ENCODE measurements at regions of chr3 and their contacts with region 1.

Region 1: GRCh38 chr3:146065573-146066006 is 95.4 kb downstream of the PLOD2 start:
- DNase-seq: peak; percentile 38
- ATAC-seq: no peak
- H3K4me3 ChIP-seq: no peak overlapping the region
- H3K27ac ChIP-seq: no peak overlapping the region
- H3K4me1 ChIP-seq: no peaks in the 10 kb centered on the region
- H3K27me3 ChIP-seq: no peaks in the 10 kb centered on the region
- CTCF ChIP-seq: peak; percentile 57 to 70 (median 63)
- POLR2A ChIP-seq: no peak
- RAD21 ChIP-seq: peak; percentile 80

Region 2: DNA sequence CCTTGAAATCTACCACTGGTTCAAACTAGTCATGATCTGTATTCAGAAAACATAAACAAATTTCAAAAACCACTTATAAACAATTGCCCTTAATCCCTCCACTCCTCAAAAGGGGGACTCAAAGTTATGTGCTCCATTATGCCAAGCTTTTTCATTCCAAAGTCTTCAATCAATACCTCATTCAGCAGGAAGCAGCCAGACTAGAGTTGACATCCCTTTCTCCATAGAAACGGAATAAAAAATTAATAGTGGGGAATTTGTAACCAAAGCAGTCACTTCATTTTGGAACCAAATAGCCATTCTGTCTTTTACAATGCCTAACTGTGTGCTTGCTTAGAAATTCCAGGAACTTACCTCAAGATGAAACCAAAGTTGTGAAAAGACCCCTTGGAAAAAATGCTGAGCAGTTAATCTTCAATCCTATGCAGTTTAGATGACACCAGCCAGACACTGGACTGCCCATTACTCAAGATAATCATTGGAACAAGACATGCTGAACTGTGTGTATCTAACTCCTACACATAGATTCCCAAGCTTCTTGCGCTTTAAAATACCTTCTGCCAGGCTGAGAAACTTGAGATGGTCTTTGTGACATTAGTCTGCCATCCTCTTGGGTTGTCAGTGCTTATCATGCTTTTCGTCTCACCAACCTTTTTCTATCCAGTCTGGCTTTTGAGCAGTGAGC is 310.8 kb before region 1 on chr3:
- CTCF ChIA-PET with region 1: no interaction called
- POLR2A ChIA-PET with region 1: no interaction called
- RAD21 ChIA-PET with region 1: no interaction called
- intact Hi-C with region 1: no loop called
- DNase-seq: no peak
- ATAC-seq: no peak
- H3K4me3 ChIP-seq: no peak overlapping the region
- H3K27ac ChIP-seq: no peak overlapping the region
- H3K4me1 ChIP-seq: no peaks in the 10 kb centered on the region
- H3K27me3 ChIP-seq: no peaks in the 10 kb centered on the region
- CTCF ChIP-seq: no peak
- POLR2A ChIP-seq: no peak
- RAD21 ChIP-seq: no peak

Region 3: DNA sequence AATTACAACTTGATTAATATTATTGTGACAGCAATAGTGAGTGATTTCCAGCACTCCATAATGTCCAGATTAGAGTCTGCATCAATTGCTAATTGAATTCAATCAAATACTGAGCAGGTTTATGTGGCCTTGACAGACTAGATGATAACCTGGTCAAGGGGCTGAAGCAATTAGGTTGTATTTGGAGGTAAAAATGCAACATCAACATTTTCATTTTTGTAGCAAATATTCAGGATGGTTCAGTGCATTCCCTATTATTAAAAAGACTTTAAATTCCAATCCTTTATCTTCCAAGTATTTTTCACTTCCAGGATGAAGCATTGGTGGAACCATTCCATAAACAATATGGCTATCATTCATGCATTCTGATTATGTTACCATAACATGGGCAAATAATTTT is 25.0 kb before region 1 on chr3:
- CTCF ChIA-PET with region 1: no interaction called
- POLR2A ChIA-PET with region 1: no interaction called
- RAD21 ChIA-PET with region 1: no interaction called
- intact Hi-C with region 1: no loop called
- DNase-seq: no peak
- ATAC-seq: no peak
- H3K4me3 ChIP-seq: no peak overlapping the region
- H3K27ac ChIP-seq: no peak overlapping the region
- H3K4me1 ChIP-seq: no peaks in the 10 kb centered on the region
- H3K27me3 ChIP-seq: no peaks in the 10 kb centered on the region
- CTCF ChIP-seq: no peak
- POLR2A ChIP-seq: no peak
- RAD21 ChIP-seq: no peak

Region 4: GRCh38 chr3:146052791-146053310 is 12.7 kb before region 1 on chr3:
- CTCF ChIA-PET with region 1: interaction called, 19 read pairs
- POLR2A ChIA-PET with region 1: no interaction called
- RAD21 ChIA-PET with region 1: no interaction called
- intact Hi-C with region 1: no loop called
- DNase-seq: no peak
- ATAC-seq: no peak
- H3K4me3 ChIP-seq: no peak overlapping the region
- H3K27ac ChIP-seq: no peak overlapping the region
- H3K4me1 ChIP-seq: no peaks in the 10 kb centered on the region
- H3K27me3 ChIP-seq: no peaks in the 10 kb centered on the region
- CTCF ChIP-seq: no peak
- POLR2A ChIP-seq: no peak
- RAD21 ChIP-seq: no peak

Region 5: GRCh38 chr3:146184616-146185015 is 119.0 kb after region 1 on chr3:
- CTCF ChIA-PET with region 1: interaction called, 109 read pairs
- POLR2A ChIA-PET with region 1: interaction called, 4 read pairs
- RAD21 ChIA-PET with region 1: interaction called, 6 to 14 read pairs
- intact Hi-C with region 1: loop called (anchors 1 kb)
- DNase-seq: peak; percentile 45
- ATAC-seq: peak; percentile 54; the same call in 1 of the 2 replicates
- H3K4me3 ChIP-seq: no peak overlapping the region
- H3K27ac ChIP-seq: no peak overlapping the region
- H3K4me1 ChIP-seq: peaks cover 0 to 11% of the 10 kb centered on the region in 2 experiments; a peak in 2 of 4 replicates
- H3K27me3 ChIP-seq: no peaks in the 10 kb centered on the region
- CTCF ChIP-seq: no peak
- POLR2A ChIP-seq: no peak
- RAD21 ChIP-seq: no peak

Region 6: DNA sequence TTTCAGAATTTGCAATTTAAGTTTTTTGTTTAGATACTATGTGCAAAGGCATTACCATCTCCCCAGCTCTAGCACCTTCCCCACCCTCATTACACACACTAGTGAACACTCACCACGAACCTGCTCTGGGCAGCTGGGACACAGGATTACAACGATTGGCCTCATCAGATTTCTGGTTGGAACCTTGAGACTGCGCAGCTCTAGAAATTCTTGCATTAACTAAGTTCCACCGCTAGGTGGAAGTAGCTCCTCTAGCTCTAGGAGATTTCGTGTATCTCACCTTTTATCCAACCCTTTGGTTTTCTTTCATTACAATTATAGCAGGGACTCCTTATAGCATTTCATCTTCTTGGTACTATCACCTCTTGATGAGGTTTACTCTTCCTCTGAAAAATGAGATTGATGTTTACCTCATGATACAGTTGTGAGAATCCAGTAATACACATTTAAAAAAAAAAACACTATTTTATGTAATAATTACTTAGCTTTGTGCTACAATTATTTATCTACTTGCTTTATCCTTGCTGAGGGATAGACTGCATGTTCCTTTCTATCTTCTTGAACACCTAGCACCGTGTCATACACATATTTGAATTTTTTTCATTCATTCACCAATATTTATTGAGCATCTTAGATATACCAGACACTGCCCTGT is 124.1 kb after region 1 on chr3:
- CTCF ChIA-PET with region 1: interaction called, 109 read pairs
- POLR2A ChIA-PET with region 1: interaction called, 4 read pairs
- RAD21 ChIA-PET with region 1: interaction called, 6 to 14 read pairs
- intact Hi-C with region 1: loop called (anchors 1 kb)
- DNase-seq: peak; percentile 47
- ATAC-seq: peak; percentile 93
- H3K4me3 ChIP-seq: no peak overlapping the region
- H3K27ac ChIP-seq: no peak overlapping the region
- H3K4me1 ChIP-seq: peaks cover 0 to 6% of the 10 kb centered on the region in 2 experiments; a peak in 2 of 4 replicates
- H3K27me3 ChIP-seq: no peaks in the 10 kb centered on the region
- CTCF ChIP-seq: peak; percentile 62 to 73 (median 65); a peak in 5 of 6 replicates
- POLR2A ChIP-seq: no peak
- RAD21 ChIP-seq: peak; percentile 78